ENCODE measurements at regions of chr15 and their contacts with region 1.

Region 1: DNA sequence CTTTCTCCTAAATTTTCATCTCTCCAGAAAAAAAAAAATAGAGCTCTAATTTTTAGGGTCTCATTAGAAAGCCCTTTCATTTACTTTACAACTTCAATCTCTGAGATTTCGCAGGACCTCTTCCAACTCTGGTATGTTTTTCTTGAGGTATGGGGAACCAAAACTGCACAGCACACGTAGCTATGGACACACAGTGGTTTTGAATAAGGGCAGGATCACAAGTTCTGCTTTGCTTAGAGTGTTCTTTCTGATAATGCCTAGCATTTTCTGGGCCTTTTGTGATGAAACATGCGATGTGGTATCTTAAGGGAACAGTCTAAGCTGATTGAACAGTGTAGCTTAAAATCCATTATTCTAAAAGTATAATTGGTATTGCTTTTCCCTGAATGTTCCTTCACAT is 25.3 kb downstream of the ZNF592 start:
- DNase-seq: no peak
- H3K4me3 ChIP-seq: no peak overlapping the region
- CTCF ChIP-seq: no peak

Region 2: DNA sequence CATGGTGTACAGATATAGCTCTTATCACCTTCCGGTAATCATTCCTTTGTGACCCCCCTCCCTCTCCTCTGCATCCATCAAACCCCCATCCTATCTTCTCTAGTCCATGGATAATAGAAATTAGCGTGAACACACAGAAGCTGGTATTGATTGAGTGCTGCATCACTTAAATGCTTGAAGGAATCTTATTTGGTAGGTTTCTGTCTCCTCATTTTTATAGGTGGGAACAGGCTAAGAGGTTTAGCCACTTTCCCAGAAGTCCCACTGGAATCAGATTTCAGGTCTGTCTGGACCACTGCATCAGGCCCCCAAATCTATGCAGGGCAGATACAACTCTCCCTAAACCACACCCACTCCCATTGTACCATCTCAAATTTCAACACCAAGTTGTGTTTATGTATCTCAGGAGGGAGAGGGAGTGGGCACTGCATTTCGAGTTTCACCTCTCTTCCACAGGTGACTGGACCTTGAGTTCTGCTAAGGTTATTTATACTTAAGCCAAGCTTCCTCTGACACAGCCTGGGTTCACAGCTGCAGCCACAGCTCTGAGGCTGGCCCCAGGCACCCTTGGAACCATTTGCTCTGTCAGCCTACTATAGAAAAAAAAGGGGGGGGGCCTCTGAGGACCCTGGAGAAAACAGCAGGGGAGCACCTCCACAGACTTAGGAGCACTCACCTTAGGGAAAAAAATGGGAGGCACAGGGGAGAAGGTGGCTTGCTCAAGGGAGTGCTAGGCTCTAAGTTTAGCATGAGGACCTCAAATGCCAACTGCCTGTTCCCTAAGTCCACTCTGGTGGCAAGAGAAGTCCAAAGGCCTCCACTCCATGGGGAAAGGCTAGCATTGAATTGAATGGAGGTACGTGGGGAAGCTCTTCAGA is 113.6 kb before region 1 on chr15:
- in situ Hi-C with region 1: loop called (anchors 5 kb)
- DNase-seq: no peak
- H3K4me3 ChIP-seq: no peak overlapping the region
- CTCF ChIP-seq: no peak

Region 3: DNA sequence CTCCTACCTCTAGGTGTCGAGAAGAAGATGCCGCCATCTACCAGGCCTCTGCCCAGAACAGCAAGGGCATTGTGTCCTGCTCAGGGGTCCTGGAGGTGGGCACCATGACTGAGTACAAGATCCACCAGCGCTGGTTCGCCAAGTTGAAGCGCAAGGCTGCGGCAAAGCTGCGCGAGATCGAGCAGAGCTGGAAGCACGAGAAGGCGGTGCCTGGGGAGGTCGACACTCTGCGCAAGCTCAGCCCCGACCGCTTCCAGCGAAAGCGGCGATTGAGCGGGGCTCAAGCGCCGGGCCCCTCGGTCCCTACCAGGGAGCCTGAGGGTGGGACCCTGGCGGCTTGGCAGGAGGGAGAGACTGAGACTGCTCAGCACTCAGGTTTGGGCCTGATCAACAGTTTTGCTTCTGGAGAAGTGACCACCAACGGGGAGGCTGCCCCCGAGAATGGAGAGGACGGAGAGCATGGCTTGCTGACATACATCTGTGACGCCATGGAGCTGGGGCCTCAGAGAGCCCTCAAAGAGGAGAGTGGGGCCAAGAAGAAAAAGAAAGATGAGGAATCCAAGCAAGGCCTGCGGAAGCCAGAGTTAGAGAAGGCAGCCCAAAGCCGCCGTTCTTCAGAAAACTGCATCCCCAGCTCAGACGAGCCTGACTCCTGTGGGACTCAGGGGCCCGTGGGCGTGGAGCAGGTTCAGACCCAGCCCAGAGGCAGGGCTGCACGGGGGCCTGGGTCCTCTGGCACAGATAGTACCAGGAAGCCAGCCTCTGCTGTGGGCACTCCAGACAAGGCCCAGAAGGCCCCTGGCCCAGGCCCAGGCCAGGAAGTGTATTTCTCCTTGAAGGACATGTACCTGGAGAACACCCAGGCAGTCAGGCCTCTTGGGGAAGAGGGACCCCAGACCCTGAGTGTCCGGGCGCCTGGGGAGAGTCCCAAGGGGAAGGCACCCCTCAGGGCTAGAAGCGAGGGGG is 66.3 kb after region 1 on chr15:
- in situ Hi-C with region 1: loop called (anchors 5 kb)
- DNase-seq: no peak
- H3K4me3 ChIP-seq: no peak overlapping the region
- CTCF ChIP-seq: no peak